K562 (cell line): ENCODE measurements at regions of chr2 and their contacts with region 1.

Region 1: GRCh38 chr2:25797620-25798488 is 80.4 kb downstream of the ASXL2 start:
- DNase-seq: no peak
- ATAC-seq: no peak
- H3K4me3 ChIP-seq: no peak overlapping the region
- H3K27ac ChIP-seq: no peak overlapping the region
- H3K4me1 ChIP-seq: no peaks in the 10 kb centered on the region; a peak in 1 of 5 replicates
- H3K27me3 ChIP-seq: no peaks in the 10 kb centered on the region
- CTCF ChIP-seq: no peak
- EP300 ChIP-seq: no peak
- POLR2A ChIP-seq: no peak
- RAD21 ChIP-seq: no peak

Region 2: DNA sequence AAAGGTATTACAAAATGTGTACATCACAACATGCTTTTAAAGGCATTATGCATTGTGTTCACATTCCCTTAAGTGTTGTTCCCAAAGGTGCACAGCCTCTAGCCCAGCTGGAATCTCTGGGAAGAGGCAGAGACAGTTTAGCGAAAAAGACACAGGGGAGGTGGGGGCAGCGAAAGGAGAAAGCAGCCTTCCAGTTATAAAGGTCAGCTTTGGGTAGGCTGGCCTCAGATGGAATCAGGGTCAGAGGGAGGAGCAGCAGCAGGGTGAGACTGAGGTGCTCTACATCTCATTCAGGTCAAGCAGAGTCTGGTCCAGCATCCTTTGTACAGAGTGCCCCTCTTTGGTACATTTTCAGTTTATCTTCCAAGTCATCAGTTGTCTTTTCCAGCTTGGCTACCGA is 11.8 kb after region 1 on chr2:
- CTCF ChIA-PET with region 1: no interaction called
- POLR2A ChIA-PET with region 1: interaction called, 19 read pairs
- in situ Hi-C with region 1: no loop called
- intact Hi-C with region 1: no loop called
- DNase-seq: no peak
- ATAC-seq: no peak
- H3K4me3 ChIP-seq: no peak overlapping the region
- H3K27ac ChIP-seq: no peak overlapping the region
- H3K4me1 ChIP-seq: no peaks in the 10 kb centered on the region; a peak in 1 of 5 replicates
- H3K27me3 ChIP-seq: no peaks in the 10 kb centered on the region
- CTCF ChIP-seq: no peak
- EP300 ChIP-seq: no peak
- POLR2A ChIP-seq: no peak
- RAD21 ChIP-seq: no peak